CD14-positive monocyte (primary cell): ENCODE measurements at regions of chr2 and their contacts with region 1.

Region 1: GRCh38 chr2:43131024-43131889 is 95.1 kb downstream of the ZFP36L2 start:
- DNase-seq: peak; percentile 88 to 94 (median 92)
- H3K4me3 ChIP-seq: peak overlapping the region in 2 of 3 experiments; percentile 6 to 65
- H3K4me3 Mint-ChIP-seq: peak overlapping the region; percentile 52 to 73
- H3K27ac ChIP-seq: peak overlapping the region; percentile 92 to 96
- H3K27ac Mint-ChIP-seq: peak overlapping the region; percentile 92 to 99 (median 97)
- H3K4me1 ChIP-seq: peaks cover 100% of the 10 kb centered on the region in 2 donors
- H3K4me1 Mint-ChIP-seq: peaks cover 98% of the 10 kb centered on the region
- H3K27me3 ChIP-seq: no peaks in the 10 kb centered on the region
- H3K27me3 Mint-ChIP-seq: peaks cover 0 to 2% (median 0%) of the 10 kb centered on the region in 3 donors
- CTCF ChIP-seq: peak; percentile 84

Region 2: DNA sequence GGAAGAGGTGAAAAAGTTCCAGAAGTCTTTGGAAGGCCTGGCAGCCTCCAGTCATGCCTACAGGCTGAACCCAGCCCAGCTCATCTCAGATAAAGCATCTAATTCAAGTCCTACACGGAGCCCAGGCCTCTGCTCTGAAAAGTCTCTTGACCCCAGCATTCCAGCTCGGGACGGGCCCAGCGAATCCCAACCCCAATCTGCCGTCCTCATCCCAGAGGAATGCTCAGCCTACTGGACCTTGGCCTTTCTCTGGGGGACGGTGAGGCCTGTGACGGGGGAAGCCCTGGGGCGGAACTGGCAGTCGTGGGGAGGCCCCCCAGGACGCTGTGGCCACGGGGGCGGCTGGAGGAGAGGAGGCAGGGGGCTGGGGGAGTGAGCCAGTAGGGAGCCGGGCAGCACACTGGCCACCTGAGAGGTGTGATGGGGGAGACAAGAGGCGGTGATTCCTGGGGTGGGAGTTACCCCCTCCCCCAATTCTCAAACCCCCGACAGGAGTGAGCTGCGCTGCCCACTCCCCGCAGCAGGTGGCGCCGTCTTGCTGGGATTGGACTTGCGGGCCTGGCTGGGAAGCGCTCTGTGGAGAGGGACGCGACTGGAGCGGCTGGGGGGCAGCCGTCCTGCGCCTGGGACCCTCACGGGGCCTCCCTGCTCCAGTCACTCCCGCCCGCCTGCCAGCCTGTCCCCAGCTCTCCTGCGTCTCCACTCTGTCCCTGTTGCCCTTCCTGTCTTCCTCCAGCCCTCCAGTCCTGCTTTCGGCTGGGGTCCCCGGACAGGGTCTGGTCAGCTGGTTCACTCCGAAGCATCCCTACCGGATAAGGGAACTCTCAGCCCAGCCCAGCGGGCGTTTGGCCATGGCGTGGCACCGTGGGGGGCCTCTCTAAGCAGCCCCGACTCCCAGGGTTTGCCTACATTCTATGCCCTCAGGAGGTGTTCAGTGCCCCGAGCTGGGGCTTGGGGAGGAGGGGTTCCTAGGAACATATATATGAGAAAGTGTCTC is 156.2 kb before region 1 on chr2:
- intact Hi-C with region 1: loop called in 1 of 2 experiments (anchors 10 kb)
- DNase-seq: peak; percentile 35 to 65 (median 46)
- H3K4me3 ChIP-seq: peak overlapping the region; percentile 17 to 72 (median 48)
- H3K4me3 Mint-ChIP-seq: peak overlapping the region; percentile 72 to 87
- H3K27ac ChIP-seq: peak overlapping the region; percentile 49 to 83
- H3K27ac Mint-ChIP-seq: peak overlapping the region; percentile 43 to 90 (median 83)
- H3K4me1 ChIP-seq: peaks cover 41 to 59% of the 10 kb centered on the region in 2 donors
- H3K4me1 Mint-ChIP-seq: peaks cover 71% of the 10 kb centered on the region
- H3K27me3 ChIP-seq: no peaks in the 10 kb centered on the region
- H3K27me3 Mint-ChIP-seq: peaks cover 0 to 3% (median 0%) of the 10 kb centered on the region in 3 donors
- CTCF ChIP-seq: peak; percentile 95

Region 3: DNA sequence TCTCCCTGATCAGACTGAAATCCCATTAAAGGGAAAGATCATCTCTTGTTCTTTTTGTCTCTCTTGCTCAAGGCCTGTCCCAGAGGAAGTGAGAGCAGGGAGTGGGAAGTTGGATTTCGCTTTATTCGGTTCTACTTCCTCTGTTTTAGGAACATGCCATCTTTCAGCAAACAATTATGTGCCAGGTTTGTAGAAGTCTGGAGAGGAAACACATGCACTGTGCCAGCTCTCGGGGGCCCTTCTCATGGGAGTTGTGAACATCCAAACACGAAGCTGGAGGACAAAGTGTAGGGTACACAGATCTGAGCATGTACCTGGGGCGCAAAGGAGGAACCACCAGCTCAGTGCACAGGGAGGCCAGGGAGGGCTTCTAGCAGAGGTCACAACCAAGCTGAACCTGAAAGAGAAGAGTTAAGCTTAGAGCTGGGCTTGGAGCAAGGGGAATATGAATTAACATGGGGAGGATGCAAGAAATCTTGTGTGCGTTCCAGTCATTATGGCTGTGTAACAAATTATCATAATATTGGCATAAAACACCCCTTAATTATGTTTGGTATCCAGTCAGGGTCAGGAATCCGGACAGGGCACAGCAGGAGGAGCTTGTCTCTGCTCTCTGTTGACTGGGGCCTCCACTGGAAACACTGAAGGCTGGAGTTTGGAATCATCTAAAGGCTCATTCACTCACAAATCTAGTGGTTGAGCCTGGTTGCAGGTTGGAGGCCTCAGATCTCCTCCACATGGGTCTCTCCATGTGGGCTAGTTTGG is 33.4 kb before region 1 on chr2:
- intact Hi-C with region 1: loop called in 1 of 2 experiments (anchors 5 kb)
- DNase-seq: peak; percentile 48 to 75 (median 65)
- H3K4me3 ChIP-seq: peak overlapping the region in 1 of 3 experiments; percentile 48
- H3K4me3 Mint-ChIP-seq: peak overlapping the region in 1 of 2 donors; percentile 61
- H3K27ac ChIP-seq: peak overlapping the region; percentile 11 to 73
- H3K27ac Mint-ChIP-seq: peak overlapping the region; percentile 82 to 91 (median 86)
- H3K4me1 ChIP-seq: peaks cover 58 to 65% of the 10 kb centered on the region in 2 donors
- H3K4me1 Mint-ChIP-seq: peaks cover 61% of the 10 kb centered on the region
- H3K27me3 ChIP-seq: no peaks in the 10 kb centered on the region
- H3K27me3 Mint-ChIP-seq: peaks cover 0 to 3% (median 0%) of the 10 kb centered on the region in 3 donors
- CTCF ChIP-seq: no peak

Region 4: GRCh38 chr2:43105586-43106558 is 25.4 kb before region 1 on chr2:
- intact Hi-C with region 1: loop called in 1 of 2 experiments (anchors 1 kb)
- DNase-seq: peak; percentile 72 to 84 (median 84)
- H3K4me3 ChIP-seq: peak overlapping the region in 1 of 3 experiments; percentile 58
- H3K4me3 Mint-ChIP-seq: peak overlapping the region; percentile 50 to 67
- H3K27ac ChIP-seq: peak overlapping the region; percentile 84 to 89
- H3K27ac Mint-ChIP-seq: peak overlapping the region; percentile 93 to 99 (median 98)
- H3K4me1 ChIP-seq: peaks cover 89 to 95% of the 10 kb centered on the region in 2 donors
- H3K4me1 Mint-ChIP-seq: peaks cover 88% of the 10 kb centered on the region
- H3K27me3 ChIP-seq: no peaks in the 10 kb centered on the region
- H3K27me3 Mint-ChIP-seq: peaks cover 0 to 5% (median 0%) of the 10 kb centered on the region in 3 donors
- CTCF ChIP-seq: peak; percentile 67

Region 5: DNA sequence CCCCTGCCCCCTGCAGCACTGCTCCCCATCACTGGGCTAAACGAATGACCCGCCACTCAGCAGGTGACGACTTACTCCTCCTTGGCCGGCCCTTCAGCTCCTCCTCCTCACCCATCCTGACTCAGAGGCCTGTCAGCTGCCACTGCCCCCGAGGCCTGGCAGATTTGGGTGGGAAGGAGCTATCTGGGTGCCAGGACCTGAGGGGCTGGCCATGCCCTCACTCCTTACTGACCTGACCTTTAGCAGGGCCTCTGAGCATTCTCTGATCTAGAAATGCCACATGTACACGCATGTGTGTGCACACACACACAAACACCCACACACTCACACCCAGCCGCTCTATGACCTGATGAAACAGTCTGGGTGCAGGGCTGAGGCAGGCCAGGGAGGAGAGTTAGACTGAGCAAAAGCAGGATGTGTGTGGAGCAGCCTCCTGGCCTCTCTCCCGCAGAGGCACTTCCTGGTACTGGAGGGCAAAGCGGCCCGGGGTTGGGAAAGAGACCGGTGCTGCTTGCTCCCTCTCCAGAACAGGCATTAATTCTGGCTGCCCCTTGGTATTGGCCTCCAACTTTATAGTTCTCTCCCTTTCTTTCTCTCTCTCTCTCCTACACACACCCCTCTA is 27.1 kb after region 1 on chr2:
- intact Hi-C with region 1: loop called (anchors 1 to 2 kb)
- DNase-seq: peak; percentile 73 to 85 (median 77)
- H3K4me3 ChIP-seq: peak overlapping the region in 1 of 3 experiments; percentile 57
- H3K4me3 Mint-ChIP-seq: peak overlapping the region; percentile 65 to 83
- H3K27ac ChIP-seq: peak overlapping the region; percentile 90 to 93
- H3K27ac Mint-ChIP-seq: peak overlapping the region; percentile 97 to 100 (median 99)
- H3K4me1 ChIP-seq: peaks cover 61 to 65% of the 10 kb centered on the region in 2 donors
- H3K4me1 Mint-ChIP-seq: peaks cover 62% of the 10 kb centered on the region
- H3K27me3 ChIP-seq: no peaks in the 10 kb centered on the region
- H3K27me3 Mint-ChIP-seq: peaks cover 0 to 8% (median 3%) of the 10 kb centered on the region in 3 donors
- CTCF ChIP-seq: no peak

Region 6: DNA sequence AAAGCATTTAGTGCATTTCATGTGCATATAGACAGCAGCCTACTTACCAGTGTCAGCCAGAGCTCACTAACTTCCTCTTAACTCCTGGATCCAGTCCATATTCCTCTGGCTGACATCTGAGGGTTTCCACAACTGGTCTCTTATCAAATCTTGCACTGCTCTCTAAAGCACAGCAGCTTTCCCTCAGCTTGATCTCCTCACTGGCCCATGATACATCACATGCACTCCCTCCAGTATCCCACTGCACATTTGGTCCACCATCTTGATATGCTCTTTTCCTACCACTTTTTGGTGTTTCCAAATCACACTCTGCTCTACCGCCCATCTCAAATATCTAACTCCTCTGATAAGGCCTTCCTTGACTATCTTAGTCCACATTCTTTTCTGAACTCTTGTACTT is 200.2 kb after region 1 on chr2:
- intact Hi-C with region 1: no loop called
- DNase-seq: peak; percentile 41 to 70 (median 50)
- H3K4me3 ChIP-seq: no peak overlapping the region
- H3K4me3 Mint-ChIP-seq: no peak overlapping the region
- H3K27ac ChIP-seq: peak overlapping the region in 1 of 2 donors; percentile 27
- H3K27ac Mint-ChIP-seq: peak overlapping the region; percentile 23 to 88 (median 59)
- H3K4me1 ChIP-seq: peaks cover 56 to 66% of the 10 kb centered on the region in 2 donors
- H3K4me1 Mint-ChIP-seq: peaks cover 61% of the 10 kb centered on the region
- H3K27me3 ChIP-seq: no peaks in the 10 kb centered on the region
- H3K27me3 Mint-ChIP-seq: peaks cover 0 to 2% (median 0%) of the 10 kb centered on the region in 3 donors
- CTCF ChIP-seq: no peak

Region 7: DNA sequence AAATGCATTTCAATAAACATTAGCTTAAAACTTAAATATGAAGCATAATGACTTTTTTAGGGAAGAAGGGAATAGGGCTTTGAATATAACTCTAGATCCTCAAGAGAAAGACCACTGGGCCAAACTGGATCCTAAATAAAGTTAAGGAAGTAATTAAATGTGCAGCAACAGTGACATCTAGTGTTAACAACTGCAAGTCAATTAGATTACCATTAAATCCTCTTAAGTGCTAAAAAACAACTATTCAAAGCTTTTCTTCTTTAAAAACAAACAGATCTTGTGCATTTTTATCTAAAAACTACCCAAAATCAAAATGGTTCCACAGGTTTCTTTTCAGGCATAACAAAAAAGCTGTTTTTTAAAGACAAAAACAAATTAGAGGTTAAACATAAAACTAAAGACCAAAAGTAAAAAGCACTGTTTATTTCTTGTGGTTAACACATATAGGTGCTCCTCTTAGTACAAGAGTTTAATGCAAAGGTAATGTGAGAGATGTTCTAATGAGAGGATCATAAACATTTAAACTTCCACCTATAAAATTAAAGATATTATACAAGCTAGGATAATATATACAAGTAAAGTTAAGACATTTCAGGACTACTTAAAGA is 353.2 kb after region 1 on chr2:
- intact Hi-C with region 1: loop called in 1 of 2 experiments (anchors 5 kb)
- DNase-seq: peak; percentile 65 to 78 (median 77)
- H3K4me3 ChIP-seq: no peak overlapping the region
- H3K4me3 Mint-ChIP-seq: no peak overlapping the region
- H3K27ac ChIP-seq: peak overlapping the region in 1 of 2 donors; percentile 60
- H3K27ac Mint-ChIP-seq: peak overlapping the region in 5 of 7 donors; percentile 45 to 80 (median 59)
- H3K4me1 ChIP-seq: peaks cover 21 to 29% of the 10 kb centered on the region in 2 donors
- H3K4me1 Mint-ChIP-seq: peaks cover 49% of the 10 kb centered on the region
- H3K27me3 ChIP-seq: no peaks in the 10 kb centered on the region
- H3K27me3 Mint-ChIP-seq: no peaks in the 10 kb centered on the region
- CTCF ChIP-seq: peak; percentile 87

Region 8: DNA sequence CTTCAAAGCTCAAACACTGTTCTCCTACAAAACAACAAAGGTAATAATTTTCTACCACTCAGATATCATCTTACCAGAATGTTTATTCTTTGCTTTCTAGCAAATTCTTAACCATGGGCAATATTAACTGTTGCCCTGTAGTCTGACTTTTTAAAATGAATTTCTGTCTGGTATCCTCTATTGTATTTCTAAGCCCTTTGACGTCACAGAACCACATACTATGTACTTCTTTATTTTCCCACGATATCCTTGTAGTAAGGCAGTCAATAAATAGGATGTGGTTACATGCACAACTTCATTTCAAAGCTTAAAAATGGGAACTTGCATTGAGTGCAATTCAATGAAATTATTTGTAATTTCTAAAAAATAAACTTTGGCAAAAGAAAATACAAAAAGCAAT is 405.9 kb after region 1 on chr2:
- intact Hi-C with region 1: loop called in 1 of 2 experiments (anchors 5 kb)
- DNase-seq: peak; percentile 80 to 92 (median 85)
- H3K4me3 ChIP-seq: no peak overlapping the region
- H3K4me3 Mint-ChIP-seq: peak overlapping the region in 1 of 2 donors; percentile 21
- H3K27ac ChIP-seq: peak overlapping the region in 1 of 2 donors; percentile 86
- H3K27ac Mint-ChIP-seq: peak overlapping the region; percentile 85 to 96 (median 92)
- H3K4me1 ChIP-seq: peaks cover 32 to 48% of the 10 kb centered on the region in 2 donors
- H3K4me1 Mint-ChIP-seq: peaks cover 41% of the 10 kb centered on the region
- H3K27me3 ChIP-seq: no peaks in the 10 kb centered on the region
- H3K27me3 Mint-ChIP-seq: no peaks in the 10 kb centered on the region
- CTCF ChIP-seq: no peak